ENCODE measurements at regions of chr13 and their contacts with region 1.

Region 1: DNA sequence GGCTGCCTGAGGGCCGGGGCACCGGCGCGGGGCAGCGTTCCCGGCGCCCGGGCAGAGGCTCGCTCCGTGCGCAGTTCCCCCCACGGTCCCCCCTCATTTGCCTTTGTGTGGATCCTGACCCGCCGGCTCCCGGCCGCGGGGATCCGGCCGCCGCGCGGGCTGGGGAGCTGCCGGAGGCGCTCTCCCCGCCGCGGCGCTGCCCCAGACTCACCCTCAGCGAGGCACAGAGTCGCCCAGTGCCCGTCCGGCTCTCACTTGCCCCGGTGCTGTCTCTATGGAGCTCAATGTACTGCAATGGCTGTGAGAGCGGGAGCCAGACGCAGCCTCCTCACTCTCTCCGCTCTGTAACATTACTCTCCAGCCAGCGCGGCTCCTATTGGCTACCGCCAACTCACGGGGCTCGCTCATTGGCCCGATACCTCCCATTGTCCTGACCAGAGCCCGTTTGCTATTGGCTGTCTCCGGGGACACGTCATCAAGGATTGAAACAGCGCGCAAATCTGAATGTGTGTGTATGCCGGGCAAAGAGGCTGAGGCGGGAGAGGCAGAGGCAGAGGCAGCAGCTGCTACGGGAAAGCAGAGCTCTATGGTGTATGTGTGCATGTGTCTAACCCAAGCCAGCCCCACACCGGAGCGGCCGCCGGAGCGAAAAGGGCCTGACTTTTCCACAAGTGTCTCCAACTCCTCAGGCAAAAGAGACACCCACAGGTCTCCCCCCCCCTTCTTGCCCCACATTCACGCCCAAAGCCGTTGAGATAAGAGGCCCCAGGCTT is at the start of gene HMGB1:
- DNase-seq: peak; percentile 99
- H3K4me3 Mint-ChIP-seq: peak within 1 kb of the TSS; percentile 95
- H3K27ac Mint-ChIP-seq: peak within 1 kb of the TSS; percentile 100
- H3K4me1 Mint-ChIP-seq: peaks cover 30% of the 10 kb centered on the region
- H3K27me3 Mint-ChIP-seq: peaks cover 3% of the 10 kb centered on the region
- total RNA-seq, gene HMGB1: 624 and 640 TPM in 2 replicates

Region 2: DNA sequence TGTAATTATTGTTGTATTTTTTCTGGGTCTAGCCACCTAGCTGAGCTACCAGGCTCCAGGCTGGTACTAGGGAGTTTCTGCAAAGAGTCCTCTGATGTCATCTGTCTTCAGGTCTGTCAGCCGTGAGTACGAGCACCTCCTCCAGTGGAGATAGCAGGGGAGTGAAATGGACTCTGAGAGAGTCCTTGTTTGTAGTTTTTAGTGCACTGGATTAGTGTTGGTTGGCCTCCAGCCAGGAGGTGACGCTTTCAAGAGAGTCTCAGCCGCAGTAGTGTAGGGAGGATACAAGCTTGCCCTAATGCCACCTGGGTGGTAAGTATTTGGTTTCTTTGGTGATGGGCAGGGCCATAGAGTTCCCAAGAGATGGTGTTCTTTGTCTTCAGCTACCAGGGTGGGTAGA is 1255.1 kb before region 1 on chr13:
- intact Hi-C with region 1: no loop called
- DNase-seq: no peak
- H3K4me3 Mint-ChIP-seq: no peak overlapping the region
- H3K27ac Mint-ChIP-seq: no peak overlapping the region
- H3K4me1 Mint-ChIP-seq: no peaks in the 10 kb centered on the region
- H3K27me3 Mint-ChIP-seq: no peaks in the 10 kb centered on the region

Region 3: DNA sequence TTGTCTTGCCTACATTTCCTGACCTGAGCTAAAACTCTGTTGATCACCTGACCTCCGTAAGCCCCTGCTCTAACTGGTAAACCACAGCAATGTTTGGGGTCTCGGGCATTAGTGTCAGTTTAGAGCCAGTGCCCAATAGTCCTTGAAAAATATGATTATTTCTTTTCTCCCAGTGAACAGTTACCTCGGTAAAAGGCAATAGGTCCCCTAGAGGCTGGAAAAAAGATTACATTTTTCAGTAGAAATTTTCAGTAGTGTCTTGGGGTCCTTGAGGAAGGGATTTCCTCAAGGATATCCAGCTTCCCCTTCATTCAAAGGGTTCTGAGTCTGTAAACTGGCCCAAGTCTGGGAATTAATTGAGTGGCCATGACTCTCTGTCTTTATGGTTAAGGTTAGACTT is 1047.7 kb before region 1 on chr13:
- intact Hi-C with region 1: no loop called
- DNase-seq: peak; percentile 8
- H3K4me3 Mint-ChIP-seq: no peak overlapping the region
- H3K27ac Mint-ChIP-seq: no peak overlapping the region
- H3K4me1 Mint-ChIP-seq: no peaks in the 10 kb centered on the region
- H3K27me3 Mint-ChIP-seq: peaks cover 1% of the 10 kb centered on the region

Region 4: DNA sequence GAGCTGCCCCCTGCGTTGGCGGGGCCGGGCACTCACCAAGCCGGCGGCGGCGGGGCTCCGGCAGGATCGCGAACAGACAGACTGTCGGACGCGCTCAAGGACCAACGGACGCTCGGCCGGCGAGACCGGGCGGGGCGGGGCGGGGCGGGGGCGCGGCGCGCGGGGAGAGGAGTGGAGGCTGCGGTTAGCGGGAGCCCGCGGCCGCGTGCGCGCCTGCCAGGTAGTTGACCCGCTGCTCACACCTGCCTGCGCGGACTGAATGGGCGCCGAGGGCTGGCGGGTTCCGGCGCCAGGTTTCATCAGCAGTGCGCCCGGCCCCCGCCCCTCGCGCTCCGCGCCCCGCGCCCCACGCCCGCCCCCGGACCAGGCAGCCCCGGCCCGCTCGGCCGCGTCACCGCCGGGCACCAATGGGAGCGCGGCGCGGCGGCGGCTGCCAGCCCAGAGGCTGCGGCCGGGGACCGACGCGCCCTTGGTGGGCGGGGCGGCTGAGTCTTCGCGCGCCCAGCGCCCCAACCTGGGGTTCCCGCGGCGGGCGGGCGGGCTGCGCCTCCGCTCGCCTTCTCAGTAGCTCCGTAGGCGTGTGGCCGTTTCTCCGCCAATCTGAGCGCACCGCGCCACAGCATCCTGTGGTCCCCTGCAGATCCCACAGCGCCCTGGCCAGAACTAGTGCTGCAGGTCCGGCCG is 870.2 kb before region 1 on chr13 and contains the start of gene SLC7A1:
- intact Hi-C with region 1: loop called (anchors 10 kb)
- DNase-seq: peak; percentile 97
- H3K4me3 Mint-ChIP-seq: peak within 1 kb of the TSS; percentile 95
- H3K27ac Mint-ChIP-seq: peak within 1 kb of the TSS; percentile 97
- H3K4me1 Mint-ChIP-seq: peaks cover 38% of the 10 kb centered on the region
- H3K27me3 Mint-ChIP-seq: peaks cover 5% of the 10 kb centered on the region
- total RNA-seq, gene SLC7A1: 137 and 138 TPM in 2 replicates

Region 5: DNA sequence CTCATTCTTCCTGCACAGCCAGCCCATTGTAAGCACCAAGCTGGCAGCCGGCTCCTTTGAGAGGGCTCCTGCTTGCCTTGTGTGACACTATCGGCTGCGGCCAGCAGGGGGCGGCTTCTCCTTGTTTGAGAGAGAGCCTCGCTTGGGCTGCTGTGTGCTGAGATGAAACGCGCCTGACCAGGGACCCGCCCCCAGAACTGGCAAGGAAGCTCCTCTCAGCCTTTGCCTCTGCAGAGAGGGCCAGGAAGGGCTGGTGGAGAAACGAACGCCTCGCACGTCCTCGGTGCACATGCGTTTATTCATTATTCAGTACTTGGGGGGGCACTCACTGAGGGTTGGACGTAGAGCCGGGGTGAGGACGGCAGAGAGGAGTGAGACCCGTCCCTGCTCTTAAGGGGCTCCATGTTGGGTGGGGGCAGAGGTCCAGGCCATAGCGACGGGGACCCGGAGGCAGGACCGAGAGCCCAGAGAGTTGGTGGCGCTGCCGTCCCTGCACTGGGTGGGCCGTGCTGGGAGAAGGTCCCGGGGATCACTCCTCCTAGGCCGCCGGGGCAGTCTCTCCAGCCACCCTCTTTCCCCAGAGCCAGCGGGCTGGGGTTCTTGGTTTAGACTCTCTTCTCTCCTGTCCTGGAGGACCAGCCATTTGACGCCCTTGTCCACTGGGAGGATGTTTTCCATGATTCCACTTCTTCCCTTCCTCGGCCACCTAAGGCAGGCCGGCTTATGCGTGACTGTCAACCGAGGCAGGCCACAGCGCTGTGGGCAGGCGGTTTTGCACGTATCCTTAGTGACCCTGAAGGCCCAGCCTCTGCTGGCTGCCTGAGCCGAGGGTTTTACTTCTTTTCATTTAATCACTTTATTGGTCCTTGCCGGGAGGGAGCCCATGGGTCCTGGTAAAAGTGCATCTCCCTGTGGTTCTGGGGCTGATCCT is 332.9 kb before region 1 on chr13:
- intact Hi-C with region 1: loop called (anchors 1 kb)
- DNase-seq: peak; percentile 99
- H3K4me3 Mint-ChIP-seq: peak overlapping the region; percentile 19
- H3K27ac Mint-ChIP-seq: peak overlapping the region; percentile 59
- H3K4me1 Mint-ChIP-seq: peaks cover 19% of the 10 kb centered on the region
- H3K27me3 Mint-ChIP-seq: no peaks in the 10 kb centered on the region

Region 6: DNA sequence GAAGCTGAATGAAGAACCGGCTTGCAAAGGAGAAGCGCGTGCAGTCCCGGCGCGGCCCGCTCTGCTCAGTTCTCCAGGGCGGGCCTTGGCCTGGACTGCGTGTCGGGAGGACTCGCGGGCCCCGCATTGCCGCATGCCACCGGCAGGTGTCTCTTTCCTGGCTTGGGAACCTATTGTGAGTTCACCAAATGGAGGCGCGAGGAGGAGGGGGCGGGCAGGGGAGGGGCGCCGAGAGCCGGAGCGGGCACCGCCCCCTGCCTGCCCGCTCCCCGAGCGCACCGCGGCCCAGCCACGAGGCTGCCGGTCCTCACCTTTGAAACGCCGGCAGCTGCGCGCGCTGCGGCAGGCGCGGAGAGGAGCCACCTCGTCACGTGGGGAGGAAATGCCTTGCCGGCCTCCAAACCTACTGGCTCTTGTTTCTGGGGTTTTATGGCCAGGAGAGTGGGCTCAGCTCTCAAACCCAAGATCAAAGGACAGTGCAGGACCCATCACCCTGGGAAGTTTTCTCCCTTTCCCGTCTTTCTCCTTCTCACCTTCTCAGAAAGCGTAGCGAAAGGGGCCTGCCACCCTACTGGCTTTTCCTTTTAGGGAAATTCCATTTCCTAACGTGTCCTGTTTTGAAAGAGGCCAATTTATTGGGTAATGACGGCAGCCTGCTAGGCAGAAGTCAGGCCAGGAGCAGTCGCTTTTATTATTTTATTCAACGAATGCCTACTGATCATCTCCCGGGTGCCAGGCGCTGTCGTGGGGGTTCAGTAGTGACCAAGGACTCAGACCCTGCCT is 57.3 kb before region 1 on chr13:
- intact Hi-C with region 1: loop called (anchors 1 kb)
- DNase-seq: peak; percentile 97
- H3K4me3 Mint-ChIP-seq: peak overlapping the region; percentile 73
- H3K27ac Mint-ChIP-seq: peak overlapping the region; percentile 80
- H3K4me1 Mint-ChIP-seq: peaks cover 23% of the 10 kb centered on the region
- H3K27me3 Mint-ChIP-seq: peaks cover 4% of the 10 kb centered on the region

Region 7: DNA sequence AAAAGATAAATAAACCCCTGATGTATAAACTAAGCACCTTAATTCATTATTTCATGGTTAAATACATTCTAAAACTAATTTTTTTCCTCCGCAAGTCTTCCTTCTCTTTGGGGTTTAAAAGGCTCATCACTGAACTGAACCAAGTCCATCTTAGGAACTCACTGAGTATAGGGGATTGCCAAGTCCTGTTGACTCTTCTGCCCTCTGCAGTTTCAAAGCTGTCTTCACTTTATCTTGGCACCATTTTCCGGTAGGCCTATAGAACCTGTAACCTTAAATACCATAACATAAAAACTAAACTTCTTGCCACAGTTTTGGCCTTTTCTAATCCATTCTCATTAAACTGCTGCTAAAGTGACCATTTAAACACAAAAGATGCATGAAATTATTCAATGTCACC is 85.4 kb after region 1 on chr13:
- intact Hi-C with region 1: loop called (anchors 5 kb)
- DNase-seq: peak; percentile 72
- H3K4me3 Mint-ChIP-seq: no peak overlapping the region
- H3K27ac Mint-ChIP-seq: no peak overlapping the region
- H3K4me1 Mint-ChIP-seq: peaks cover 2% of the 10 kb centered on the region
- H3K27me3 Mint-ChIP-seq: peaks cover 2% of the 10 kb centered on the region

Region 8: GRCh38 chr13:30593001-30593400 is 127.2 kb after region 1 on chr13:
- intact Hi-C with region 1: no loop called
- DNase-seq: no peak
- H3K4me3 Mint-ChIP-seq: no peak overlapping the region
- H3K27ac Mint-ChIP-seq: no peak overlapping the region
- H3K4me1 Mint-ChIP-seq: no peaks in the 10 kb centered on the region
- H3K27me3 Mint-ChIP-seq: peaks cover 17% of the 10 kb centered on the region

Region 9: GRCh38 chr13:30673669-30674521 is 208.1 kb after region 1 on chr13:
- intact Hi-C with region 1: loop called (anchors 10 kb)
- DNase-seq: peak; percentile 96
- H3K4me3 Mint-ChIP-seq: peak overlapping the region; percentile 86
- H3K27ac Mint-ChIP-seq: peak overlapping the region; percentile 80
- H3K4me1 Mint-ChIP-seq: peaks cover 9% of the 10 kb centered on the region
- H3K27me3 Mint-ChIP-seq: peaks cover 25% of the 10 kb centered on the region

Region 10: DNA sequence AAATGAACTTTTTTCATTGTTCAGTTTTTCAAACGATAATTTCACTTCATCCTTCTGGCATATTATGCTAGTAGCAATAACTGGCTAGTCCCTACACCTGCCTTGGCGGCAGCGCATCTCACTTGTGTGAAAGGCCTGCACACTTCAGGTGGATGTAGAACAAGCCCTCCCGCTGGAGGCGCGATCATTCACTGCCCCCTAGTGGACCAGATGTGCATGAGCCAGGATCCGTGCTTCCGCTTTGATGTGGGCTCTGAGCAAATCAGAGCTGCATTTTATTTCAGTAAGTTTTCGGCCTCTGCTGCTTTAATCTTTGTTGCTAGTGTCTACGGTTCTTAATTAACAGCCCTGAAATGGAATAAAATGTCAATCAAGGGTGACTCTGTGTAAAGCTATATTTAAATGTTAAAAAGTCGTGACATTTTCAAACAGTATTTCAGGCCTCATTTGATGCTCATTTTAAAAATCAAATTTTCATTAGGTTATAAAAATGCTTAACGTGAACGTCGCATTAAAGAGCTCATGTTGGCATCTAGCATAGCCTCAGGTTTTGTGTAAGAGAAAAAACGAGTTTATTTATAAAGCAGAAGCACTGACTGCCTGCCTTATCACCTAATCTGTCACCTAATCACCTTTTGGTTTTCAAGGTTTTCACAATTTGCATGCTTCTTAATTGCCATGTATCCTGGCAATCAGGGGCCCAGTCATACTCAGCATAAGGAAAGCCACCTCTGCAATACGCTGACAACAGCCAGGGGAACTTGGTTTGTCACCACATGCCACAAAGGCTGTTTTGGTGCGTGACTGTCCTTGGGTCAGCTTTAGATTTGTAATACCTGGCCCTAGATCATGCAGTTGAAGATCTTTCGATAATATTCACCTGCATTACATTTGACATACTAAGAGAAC is 578.9 kb after region 1 on chr13:
- intact Hi-C with region 1: loop called (anchors 1 kb)
- DNase-seq: peak; percentile 96
- H3K4me3 Mint-ChIP-seq: peak overlapping the region; percentile 74
- H3K27ac Mint-ChIP-seq: peak overlapping the region; percentile 91
- H3K4me1 Mint-ChIP-seq: peaks cover 48% of the 10 kb centered on the region
- H3K27me3 Mint-ChIP-seq: peaks cover 4% of the 10 kb centered on the region